Mammary epithelial cell (primary cell): ENCODE measurements at regions of chr6 and their contacts with region 1.

Region 1: GRCh38 chr6:25223490-25223991 is 55.6 kb upstream of the CARMIL1 start:
- DNase-seq: peak; percentile 52
- H3K4me3 ChIP-seq: peak overlapping the region in 2 of 3 experiments; percentile 3
- H3K27ac ChIP-seq: no peak overlapping the region
- H3K4me1 ChIP-seq: peaks cover 20% of the 10 kb centered on the region
- H3K27me3 ChIP-seq: no peaks in the 10 kb centered on the region
- CTCF ChIP-seq: peak; percentile 84 to 92

Region 2: GRCh38 chr6:25138237-25139125 is 85.1 kb before region 1 on chr6:
- CTCF ChIA-PET with region 1: interaction called, 3 read pairs
- dilution Hi-C with region 1: no loop called
- in situ Hi-C with region 1: no loop called
- intact Hi-C with region 1: loop called (anchors 1 kb)
- DNase-seq: peak; percentile 68
- H3K4me3 ChIP-seq: peak overlapping the region; percentile 41 to 69 (median 49)
- H3K27ac ChIP-seq: peak overlapping the region; percentile 35
- H3K4me1 ChIP-seq: peaks cover 12% of the 10 kb centered on the region
- H3K27me3 ChIP-seq: no peaks in the 10 kb centered on the region
- CTCF ChIP-seq: peak; percentile 25 to 38

Region 3: GRCh38 chr6:25263657-25264056 is 40.1 kb after region 1 on chr6:
- CTCF ChIA-PET with region 1: interaction called, 3 read pairs
- dilution Hi-C with region 1: no loop called
- in situ Hi-C with region 1: no loop called
- intact Hi-C with region 1: loop called (anchors 1 kb)
- DNase-seq: peak; percentile 68
- H3K4me3 ChIP-seq: no peak overlapping the region
- H3K27ac ChIP-seq: no peak overlapping the region
- H3K4me1 ChIP-seq: no peaks in the 10 kb centered on the region
- H3K27me3 ChIP-seq: no peaks in the 10 kb centered on the region
- CTCF ChIP-seq: no peak

Region 4: GRCh38 chr6:25320459-25320858 is 96.9 kb after region 1 on chr6:
- CTCF ChIA-PET with region 1: no interaction called
- dilution Hi-C with region 1: no loop called
- in situ Hi-C with region 1: no loop called
- intact Hi-C with region 1: no loop called
- DNase-seq: no peak
- H3K4me3 ChIP-seq: no peak overlapping the region
- H3K27ac ChIP-seq: no peak overlapping the region
- H3K4me1 ChIP-seq: peaks cover 4% of the 10 kb centered on the region
- H3K27me3 ChIP-seq: no peaks in the 10 kb centered on the region
- CTCF ChIP-seq: no peak

Region 5: GRCh38 chr6:25556516-25556915 is 333.0 kb after region 1 on chr6:
- CTCF ChIA-PET with region 1: interaction called, 4 read pairs
- dilution Hi-C with region 1: no loop called
- in situ Hi-C with region 1: no loop called
- intact Hi-C with region 1: loop called (anchors 1 kb)
- DNase-seq: peak; percentile 35
- H3K4me3 ChIP-seq: no peak overlapping the region
- H3K27ac ChIP-seq: no peak overlapping the region
- H3K4me1 ChIP-seq: no peaks in the 10 kb centered on the region
- H3K27me3 ChIP-seq: no peaks in the 10 kb centered on the region
- CTCF ChIP-seq: peak; percentile 87

Region 6: GRCh38 chr6:25590986-25591385 is 367.4 kb after region 1 on chr6:
- CTCF ChIA-PET with region 1: no interaction called
- dilution Hi-C with region 1: no loop called
- in situ Hi-C with region 1: no loop called
- intact Hi-C with region 1: no loop called
- DNase-seq: no peak
- H3K4me3 ChIP-seq: no peak overlapping the region
- H3K27ac ChIP-seq: no peak overlapping the region
- H3K4me1 ChIP-seq: no peaks in the 10 kb centered on the region
- H3K27me3 ChIP-seq: no peaks in the 10 kb centered on the region
- CTCF ChIP-seq: no peak

Region 7: GRCh38 chr6:25601800-25602673 is 378.5 kb after region 1 on chr6:
- CTCF ChIA-PET with region 1: no interaction called
- dilution Hi-C with region 1: no loop called
- in situ Hi-C with region 1: no loop called
- intact Hi-C with region 1: loop called (anchors 1 kb)
- DNase-seq: peak; percentile 12
- H3K4me3 ChIP-seq: no peak overlapping the region
- H3K27ac ChIP-seq: no peak overlapping the region
- H3K4me1 ChIP-seq: no peaks in the 10 kb centered on the region
- H3K27me3 ChIP-seq: no peaks in the 10 kb centered on the region
- CTCF ChIP-seq: peak; percentile 44 to 50